CD4-positive, alpha-beta T cell (primary cell): ENCODE measurements at regions of chr17 and their contacts with region 1.

Region 1: DNA sequence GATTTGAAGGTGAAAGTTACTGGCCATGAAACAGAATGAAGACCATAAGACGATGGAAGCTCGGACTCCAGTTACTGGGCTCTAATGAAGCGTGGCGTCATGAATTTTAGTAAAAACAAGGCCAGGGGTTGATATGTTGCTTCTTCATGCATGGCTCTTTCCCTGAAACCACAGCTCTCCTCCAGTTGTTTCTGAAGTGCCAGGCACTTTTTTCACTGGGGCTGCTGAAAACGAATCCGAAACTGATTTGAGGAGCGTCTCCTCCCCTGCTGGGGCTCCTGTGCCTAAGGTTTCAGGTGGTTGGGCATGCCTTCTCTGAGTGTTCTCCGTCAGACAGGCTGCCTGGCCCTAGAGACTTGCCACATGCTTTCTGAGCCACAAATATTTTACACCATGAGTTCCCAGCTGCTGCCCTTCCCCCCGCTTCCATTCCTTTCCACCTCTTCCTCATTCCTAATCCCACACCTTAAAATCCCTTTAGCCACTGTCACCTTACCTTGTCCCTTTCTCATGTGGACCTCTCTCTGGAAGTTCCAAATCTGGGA is 3.7 kb upstream of the MYL4 start:
- DNase-seq: peak; percentile 46 to 90 (median 60)
- ATAC-seq: peak; percentile 82
- H3K4me3 ChIP-seq: peak overlapping the region; percentile 50
- H3K4me3 Mint-ChIP-seq: peak overlapping the region; percentile 81
- H3K27ac ChIP-seq: peak overlapping the region; percentile 66 to 87
- H3K27ac Mint-ChIP-seq: peak overlapping the region; percentile 92
- H3K4me1 ChIP-seq: peaks cover 54% of the 10 kb centered on the region
- H3K4me1 Mint-ChIP-seq: peaks cover 51% of the 10 kb centered on the region
- H3K27me3 ChIP-seq: no peaks in the 10 kb centered on the region
- H3K27me3 Mint-ChIP-seq: no peaks in the 10 kb centered on the region
- CTCF ChIP-seq: no peak

Region 2: GRCh38 chr17:46929413-46929812 is 276.1 kb before region 1 on chr17:
- CTCF ChIA-PET with region 1: no interaction called
- POLR2A ChIA-PET with region 1: no interaction called
- intact Hi-C with region 1: no loop called
- DNase-seq: no peak
- ATAC-seq: no peak
- H3K4me3 ChIP-seq: no peak overlapping the region
- H3K4me3 Mint-ChIP-seq: no peak overlapping the region
- H3K27ac ChIP-seq: no peak overlapping the region
- H3K27ac Mint-ChIP-seq: no peak overlapping the region
- H3K4me1 ChIP-seq: peaks cover 14% of the 10 kb centered on the region
- H3K4me1 Mint-ChIP-seq: peaks cover 49% of the 10 kb centered on the region
- H3K27me3 ChIP-seq: no peaks in the 10 kb centered on the region
- H3K27me3 Mint-ChIP-seq: no peaks in the 10 kb centered on the region
- CTCF ChIP-seq: no peak

Region 3: GRCh38 chr17:47188876-47189731 is 16.4 kb before region 1 on chr17 and contains the start of gene CDC27:
- CTCF ChIA-PET with region 1: interaction called, 5 read pairs
- POLR2A ChIA-PET with region 1: interaction called, 68 read pairs
- intact Hi-C with region 1: no loop called
- DNase-seq: peak; percentile 99 to 100 (median 100)
- ATAC-seq: peak; percentile 94
- H3K4me3 ChIP-seq: peak within 1 kb of the TSS; percentile 72
- H3K4me3 Mint-ChIP-seq: peak within 1 kb of the TSS; percentile 96
- H3K27ac ChIP-seq: peak within 1 kb of the TSS; percentile 79 to 83
- H3K27ac Mint-ChIP-seq: peak within 1 kb of the TSS; percentile 89
- H3K4me1 ChIP-seq: peaks cover 32% of the 10 kb centered on the region
- H3K4me1 Mint-ChIP-seq: peaks cover 62% of the 10 kb centered on the region
- H3K27me3 ChIP-seq: no peaks in the 10 kb centered on the region
- H3K27me3 Mint-ChIP-seq: no peaks in the 10 kb centered on the region
- CTCF ChIP-seq: no peak
- total RNA-seq, gene CDC27: 52.5 to 52.8 TPM

Region 4: GRCh38 chr17:47220531-47220999 is 15.1 kb after region 1 on chr17:
- CTCF ChIA-PET with region 1: interaction called, 3 read pairs
- POLR2A ChIA-PET with region 1: interaction called, 35 read pairs
- intact Hi-C with region 1: loop called in 1 of 2 experiments (anchors 1 kb)
- DNase-seq: peak in 3 of 14 experiments; percentile 7 to 68 (median 32)
- ATAC-seq: peak; percentile 37
- H3K4me3 ChIP-seq: no peak overlapping the region
- H3K4me3 Mint-ChIP-seq: no peak overlapping the region
- H3K27ac ChIP-seq: no peak overlapping the region
- H3K27ac Mint-ChIP-seq: no peak overlapping the region
- H3K4me1 ChIP-seq: peaks cover 51% of the 10 kb centered on the region
- H3K4me1 Mint-ChIP-seq: peaks cover 37% of the 10 kb centered on the region
- H3K27me3 ChIP-seq: no peaks in the 10 kb centered on the region
- H3K27me3 Mint-ChIP-seq: no peaks in the 10 kb centered on the region
- CTCF ChIP-seq: no peak